ENCODE measurements at regions of chr4 and their contacts with region 1.

Region 1: GRCh38 chr4:1192091-1192492 is 19.7 kb upstream of the SPON2 start:
- DNase-seq: no peak
- ATAC-seq: peak; percentile 79
- H3K4me3 ChIP-seq: peak overlapping the region in 1 of 3 experiments; percentile 5; a peak in 1 of 6 replicates
- H3K27ac ChIP-seq: no peak overlapping the region
- H3K4me1 ChIP-seq: peaks cover 15% of the 10 kb centered on the region
- H3K27me3 ChIP-seq: no peaks in the 10 kb centered on the region
- CTCF ChIP-seq: no peak
- EP300 ChIP-seq: no peak
- POLR2A ChIP-seq: no peak
- RAD21 ChIP-seq: no peak

Region 2: DNA sequence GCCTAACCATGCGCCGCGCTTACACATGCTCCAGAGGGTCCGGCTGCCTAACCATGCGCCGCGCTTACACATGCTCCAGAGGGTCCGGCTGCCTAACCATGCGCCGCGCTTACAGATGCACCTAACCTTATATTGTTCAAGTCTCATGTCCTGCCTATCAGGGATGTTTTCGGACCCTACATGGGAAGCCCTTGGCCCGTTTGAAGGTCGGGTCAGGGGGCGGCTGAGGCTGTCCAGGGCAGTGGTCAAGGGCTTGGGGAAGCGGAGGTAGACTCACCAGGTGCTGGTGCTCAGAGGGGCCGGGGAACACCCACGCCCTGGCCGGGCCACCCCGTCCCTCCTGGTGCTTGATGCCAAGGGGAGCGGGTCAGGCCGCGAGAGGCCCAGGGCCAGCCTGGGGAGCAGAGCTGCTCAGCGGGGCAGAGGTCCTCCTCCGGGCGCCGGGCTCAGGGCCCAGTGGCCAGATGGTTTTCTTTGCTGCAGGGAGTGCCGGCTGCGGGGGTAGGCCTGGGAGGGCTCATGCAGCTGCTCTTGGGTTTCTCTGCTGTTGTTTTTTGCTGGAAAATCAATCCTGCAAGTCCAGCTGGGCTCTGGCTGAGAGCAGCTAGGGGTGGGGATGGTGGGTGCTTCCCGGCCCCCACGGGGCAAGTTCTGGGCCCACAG is 15.6 kb after region 1 on chr4:
- CTCF ChIA-PET with region 1: no interaction called
- POLR2A ChIA-PET with region 1: interaction called, 13 read pairs
- in situ Hi-C with region 1: no loop called
- intact Hi-C with region 1: no loop called
- DNase-seq: no peak
- ATAC-seq: peak; percentile 10
- H3K4me3 ChIP-seq: no peak overlapping the region
- H3K27ac ChIP-seq: no peak overlapping the region
- H3K4me1 ChIP-seq: peaks cover 45% of the 10 kb centered on the region
- H3K27me3 ChIP-seq: no peaks in the 10 kb centered on the region
- CTCF ChIP-seq: no peak
- EP300 ChIP-seq: no peak
- POLR2A ChIP-seq: no peak
- RAD21 ChIP-seq: no peak

Measured in HepG2 (cell line).